AG04450 (cell line): ENCODE measurements at regions of chr7 and their contacts with region 1.

Region 1: GRCh38 chr7:39580149-39580874 is 14.1 kb downstream of the YAE1 start:
- DNase-seq: peak; percentile 91
- H3K4me3 ChIP-seq: no peak overlapping the region
- H3K27ac ChIP-seq: no peak overlapping the region
- H3K27me3 ChIP-seq: no peaks in the 10 kb centered on the region
- CTCF ChIP-seq: peak; percentile 85

Region 2: GRCh38 chr7:39609113-39609934 is 29.0 kb after region 1 on chr7:
- CTCF ChIA-PET with region 1: interaction called, 12 read pairs
- POLR2A ChIA-PET with region 1: no interaction called
- DNase-seq: no peak
- H3K4me3 ChIP-seq: peak overlapping the region; percentile 44
- H3K27ac ChIP-seq: peak overlapping the region; percentile 96
- H3K27me3 ChIP-seq: no peaks in the 10 kb centered on the region
- CTCF ChIP-seq: 0 out of 2 replicates have a peak, but pooled peaks have one; percentile 13

Region 3: DNA sequence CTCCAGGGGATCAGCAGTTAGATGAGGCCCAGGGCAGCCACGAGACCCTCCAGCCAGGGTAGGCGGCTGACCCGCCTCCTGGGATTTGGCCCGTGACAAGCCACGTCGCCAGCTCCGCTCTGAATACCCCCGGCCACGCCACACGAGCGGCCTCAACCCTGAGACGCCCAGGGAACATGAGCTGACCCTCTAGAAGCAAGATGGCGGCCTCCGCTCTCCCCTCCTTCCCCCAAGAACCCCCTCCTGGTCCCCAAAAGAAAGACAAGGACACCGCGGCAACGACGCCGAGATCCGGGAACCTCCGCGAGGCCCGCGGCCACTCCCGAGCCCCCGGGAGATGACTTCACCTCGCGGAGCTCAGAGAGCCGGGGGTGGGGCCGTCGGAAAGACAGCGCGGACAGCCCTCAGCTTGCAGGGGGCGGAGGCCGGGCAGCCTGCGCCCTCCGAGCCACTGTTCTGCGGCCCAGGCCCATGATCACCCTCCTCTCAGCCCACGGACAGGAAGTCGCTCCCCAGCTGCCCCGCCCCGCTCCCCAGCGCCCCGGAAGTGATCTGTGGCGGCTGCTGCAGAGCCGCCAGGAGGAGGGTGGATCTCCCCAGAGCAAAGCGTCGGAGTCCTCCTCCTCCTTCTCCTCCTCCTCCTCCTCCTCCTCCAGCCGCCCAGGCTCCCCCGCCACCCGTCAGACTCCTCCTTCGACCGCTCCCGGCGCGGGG is 42.9 kb after region 1 on chr7 and contains the start of gene RALA:
- CTCF ChIA-PET with region 1: interaction called, 24 read pairs
- POLR2A ChIA-PET with region 1: interaction called, 5 read pairs
- DNase-seq: peak; percentile 85
- H3K4me3 ChIP-seq: peak within 1 kb of the TSS; percentile 76
- H3K27ac ChIP-seq: peak within 1 kb of the TSS; percentile 97
- H3K27me3 ChIP-seq: no peaks in the 10 kb centered on the region
- CTCF ChIP-seq: no peak
- polyA plus RNA-seq, gene RALA: 45.0 and 59.2 TPM in 2 replicates

Region 4: DNA sequence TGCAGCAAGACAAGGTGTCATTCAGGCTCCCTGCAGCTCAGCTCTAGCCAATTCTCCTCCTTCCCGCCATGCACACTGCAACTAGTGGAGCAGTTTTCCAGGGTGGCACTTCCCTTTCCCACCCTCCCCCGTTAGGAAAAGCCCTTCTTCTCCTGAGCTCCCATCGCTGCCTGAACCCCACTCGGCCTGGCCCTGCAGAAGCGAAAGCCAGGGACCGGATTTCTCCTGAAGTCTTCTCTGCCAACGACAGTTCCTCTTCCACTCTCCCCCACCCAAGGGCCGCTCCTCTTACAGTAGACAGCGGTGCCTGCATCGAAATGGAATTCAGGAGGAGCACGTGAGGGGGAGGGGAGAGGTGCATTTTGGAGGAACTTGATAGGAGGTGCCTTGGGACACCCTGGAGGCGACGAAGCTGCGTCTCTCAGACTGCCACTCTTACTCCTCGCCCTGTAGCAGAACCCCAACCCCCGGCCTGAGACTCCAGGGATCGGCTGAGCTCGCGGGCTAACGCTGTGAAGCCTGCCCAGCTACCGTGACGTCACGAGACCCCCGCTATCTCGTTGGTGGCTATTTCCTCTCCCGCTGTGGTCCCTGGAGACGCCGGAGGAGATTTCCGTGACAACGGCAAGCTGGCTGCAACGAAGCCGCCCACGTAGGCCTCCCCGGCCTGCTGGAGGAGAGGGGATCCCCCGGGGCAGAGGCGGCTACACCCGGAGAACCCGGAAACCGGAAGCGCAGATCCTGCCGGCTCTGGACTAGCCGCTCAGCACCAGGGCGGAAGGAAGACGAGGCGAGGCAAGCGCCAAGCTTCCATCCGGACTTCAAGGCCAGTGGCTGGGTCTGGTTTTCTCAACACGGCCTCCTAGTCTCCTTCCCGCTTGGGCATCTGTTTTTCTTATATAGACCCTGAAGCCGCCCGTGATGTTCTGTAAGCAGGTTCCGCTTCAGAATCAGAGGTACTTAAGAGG is 152.8 kb after region 1 on chr7:
- CTCF ChIA-PET with region 1: interaction called, 35 read pairs
- POLR2A ChIA-PET with region 1: no interaction called
- DNase-seq: peak; percentile 94
- H3K4me3 ChIP-seq: peak overlapping the region; percentile 68
- H3K27ac ChIP-seq: peak overlapping the region; percentile 100
- H3K27me3 ChIP-seq: no peaks in the 10 kb centered on the region
- CTCF ChIP-seq: no peak

Region 5: GRCh38 chr7:39754326-39755120 is 174.2 kb after region 1 on chr7:
- CTCF ChIA-PET with region 1: interaction called, 409 read pairs
- POLR2A ChIA-PET with region 1: interaction called, 3 read pairs
- DNase-seq: no peak
- H3K4me3 ChIP-seq: peak overlapping the region; percentile 34
- H3K27ac ChIP-seq: peak overlapping the region; percentile 86
- H3K27me3 ChIP-seq: no peaks in the 10 kb centered on the region
- CTCF ChIP-seq: peak; percentile 11; the same call in 1 of the 2 replicates

Region 6: DNA sequence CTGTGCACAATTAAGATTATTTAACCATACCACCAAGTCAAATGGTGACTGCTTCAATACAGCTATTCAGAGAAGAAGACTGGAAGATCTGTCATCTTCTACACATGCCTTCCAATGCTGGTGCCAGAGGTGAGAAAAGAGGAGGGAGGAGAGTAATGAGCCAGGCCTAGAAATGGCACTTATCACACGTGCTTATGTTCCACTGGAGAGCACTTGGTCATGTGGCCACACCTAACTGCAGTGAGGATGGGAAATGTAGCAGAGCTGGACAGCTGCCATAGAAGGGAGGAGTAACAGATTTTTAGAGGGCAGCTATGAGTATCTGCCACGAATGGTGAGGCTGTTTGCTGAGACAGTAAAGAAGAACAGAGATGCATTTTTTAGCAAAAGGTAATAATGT is 477.0 kb after region 1 on chr7:
- CTCF ChIA-PET with region 1: interaction called, 35 read pairs
- POLR2A ChIA-PET with region 1: no interaction called
- DNase-seq: no peak
- H3K4me3 ChIP-seq: no peak overlapping the region
- H3K27ac ChIP-seq: no peak overlapping the region
- H3K27me3 ChIP-seq: no peaks in the 10 kb centered on the region
- CTCF ChIP-seq: no peak